ENCODE measurements at regions of chr6 and their contacts with region 1.

Region 1: DNA sequence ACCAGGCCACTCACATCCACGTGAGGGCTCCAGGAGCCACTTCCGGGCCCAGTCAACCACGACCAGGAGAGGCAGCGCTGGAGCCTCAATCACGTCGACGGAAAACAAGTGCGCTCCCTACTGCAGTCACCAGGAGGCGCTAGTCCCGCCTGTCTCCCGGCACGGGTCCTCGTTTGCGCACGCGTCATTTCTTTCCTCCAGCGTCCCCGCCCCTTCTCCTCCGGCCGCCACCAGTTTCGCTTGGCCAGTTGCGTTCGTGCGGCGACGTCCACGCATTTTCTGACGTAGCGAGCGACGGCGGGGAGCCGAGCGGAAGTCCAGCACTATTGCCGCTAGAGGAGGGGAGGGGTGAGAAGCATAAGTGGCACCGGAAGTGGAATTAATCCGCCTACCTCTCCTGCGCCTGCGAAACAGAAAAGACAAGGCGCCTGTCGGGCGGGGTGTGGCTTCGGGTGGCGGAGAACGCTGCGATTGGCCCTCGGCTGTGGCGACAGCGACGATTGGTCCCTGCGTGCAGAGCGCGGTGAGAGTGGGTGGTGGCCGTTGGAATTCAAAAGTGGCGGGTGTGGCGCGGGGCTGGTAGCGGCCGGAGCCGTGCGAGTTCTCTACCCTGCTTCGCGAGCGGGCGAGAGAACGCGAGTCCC is at the start of gene KIFC1:
- DNase-seq: peak; percentile 96 to 99
- H3K4me3 ChIP-seq: peak within 1 kb of the TSS; percentile 65 to 77
- H3K27ac ChIP-seq: peak within 1 kb of the TSS; percentile 91 to 93
- H3K4me1 ChIP-seq: peaks cover 3 to 6% of the 10 kb centered on the region in 2 donors
- H3K27me3 ChIP-seq: no peaks in the 10 kb centered on the region
- CTCF ChIP-seq: peak; percentile 93 to 96 (median 94)
- total RNA-seq, gene KIFC1: not detected

Region 2: GRCh38 chr6:33271458-33272274 is 119.7 kb before region 1 on chr6 and contains the starts of genes RPS18 and VPS52:
- intact Hi-C with region 1: loop called (anchors 2 kb)
- DNase-seq: peak; percentile 81 to 98
- H3K4me3 ChIP-seq: peak within 1 kb of the TSS; percentile 71 to 94
- H3K27ac ChIP-seq: peak within 1 kb of the TSS; percentile 91 to 96
- H3K4me1 ChIP-seq: peaks cover 9 to 42% of the 10 kb centered on the region in 2 donors
- H3K27me3 ChIP-seq: no peaks in the 10 kb centered on the region
- CTCF ChIP-seq: no peak
- total RNA-seq, gene RPS18: 1,863 TPM
- total RNA-seq, gene VPS52: 50.1 TPM

Region 3: DNA sequence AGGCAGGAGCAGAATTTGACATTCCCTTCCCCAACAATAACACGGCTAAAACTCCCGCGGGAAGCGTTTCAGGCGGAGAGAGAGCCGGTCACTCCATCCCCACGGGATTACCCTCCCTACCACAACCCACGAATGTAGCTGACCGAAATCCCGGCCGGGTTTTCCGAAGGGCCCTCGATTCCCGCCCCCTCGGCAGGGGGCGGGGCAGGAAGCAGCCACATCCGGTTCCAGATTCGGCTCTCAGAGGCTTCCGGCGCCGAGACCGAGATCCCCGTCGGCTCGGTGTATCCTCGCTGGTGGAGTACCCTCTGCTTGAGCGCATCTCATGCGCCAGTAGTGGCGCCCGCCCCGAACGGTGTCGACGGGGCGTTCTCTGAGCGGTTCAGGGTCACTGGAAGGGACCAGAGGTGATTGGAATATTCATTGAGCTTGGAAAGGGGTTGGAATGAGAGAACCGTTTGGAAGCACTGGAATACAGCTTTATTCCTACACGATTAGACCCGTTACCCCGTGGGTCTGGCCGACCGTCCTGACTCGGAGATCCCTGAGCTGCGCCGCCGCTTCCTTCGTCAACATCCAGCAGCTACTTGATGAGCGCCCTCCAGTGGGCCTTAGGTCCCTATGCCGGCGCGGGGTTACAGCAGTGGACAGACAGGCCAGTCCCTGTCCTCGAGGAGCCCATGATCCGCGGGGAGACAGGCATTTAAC is 92.0 kb before region 1 on chr6:
- intact Hi-C with region 1: loop called (anchors 1 kb)
- DNase-seq: peak in 1 of 2 donors; percentile 94
- H3K4me3 ChIP-seq: peak overlapping the region; percentile 96 to 97
- H3K27ac ChIP-seq: peak overlapping the region; percentile 97 to 98
- H3K4me1 ChIP-seq: peaks cover 7 to 18% of the 10 kb centered on the region in 2 donors
- H3K27me3 ChIP-seq: no peaks in the 10 kb centered on the region
- CTCF ChIP-seq: peak; percentile 65 to 76 (median 75)

Region 4: GRCh38 chr6:33410050-33410710 is 18.8 kb after region 1 on chr6:
- intact Hi-C with region 1: loop called (anchors 1 kb)
- DNase-seq: peak; percentile 89 to 98
- H3K4me3 ChIP-seq: peak overlapping the region; percentile 84 to 98
- H3K27ac ChIP-seq: peak overlapping the region; percentile 96 to 99
- H3K4me1 ChIP-seq: peaks cover 10% of the 10 kb centered on the region in 2 donors
- H3K27me3 ChIP-seq: no peaks in the 10 kb centered on the region
- CTCF ChIP-seq: no peak

Region 5: DNA sequence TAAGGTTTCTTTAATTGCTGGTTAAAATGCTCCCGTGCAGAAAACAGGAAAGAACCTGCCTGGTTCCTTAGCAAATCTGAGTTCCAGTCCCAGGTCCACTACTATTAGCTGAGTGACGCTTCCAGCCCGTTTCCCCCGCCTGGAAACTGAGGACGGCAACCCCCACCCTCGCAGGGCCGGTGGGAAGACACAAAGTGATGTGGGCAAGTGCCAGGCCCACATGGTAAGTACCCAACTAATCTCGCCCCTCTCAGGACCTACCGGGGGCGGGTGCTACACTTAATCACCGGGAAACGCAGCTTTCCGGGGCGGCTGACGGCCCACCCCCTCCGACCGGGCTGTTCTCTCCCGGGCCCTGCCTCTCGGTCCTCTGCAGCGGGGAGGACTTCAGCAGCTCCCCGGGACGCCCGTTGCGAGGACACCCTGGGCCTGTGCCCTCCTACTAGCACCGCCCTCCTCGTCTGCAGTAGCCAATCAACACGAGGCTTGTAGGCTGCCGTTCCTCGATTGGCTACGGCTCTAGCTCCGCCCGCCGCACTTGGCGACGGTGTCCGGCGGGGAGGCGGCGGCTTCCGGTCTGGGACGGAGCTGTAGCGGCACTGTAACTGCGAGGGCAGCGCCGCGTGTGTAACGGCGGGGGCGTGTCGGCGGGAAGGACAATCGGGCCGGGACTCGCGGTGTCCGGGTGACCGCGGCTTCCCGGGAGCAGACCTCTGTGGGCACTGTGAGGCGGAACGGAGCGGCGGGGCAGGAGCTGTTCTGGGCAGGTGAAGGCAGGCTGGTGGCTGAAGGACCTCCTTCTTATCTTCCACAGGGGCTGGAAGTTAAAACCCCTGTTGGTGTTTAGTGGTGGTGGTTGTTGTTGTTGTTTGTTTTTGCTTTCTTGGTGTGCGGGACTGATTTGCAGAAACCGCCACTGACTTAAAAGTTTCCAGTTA is 62.9 kb after region 1 on chr6 and contains the start of gene ZBTB9:
- intact Hi-C with region 1: loop called (anchors 1 kb)
- DNase-seq: peak; percentile 92 to 98
- H3K4me3 ChIP-seq: peak within 1 kb of the TSS; percentile 87 to 94
- H3K27ac ChIP-seq: peak within 1 kb of the TSS; percentile 70 to 73
- H3K4me1 ChIP-seq: peaks cover 6 to 17% of the 10 kb centered on the region in 2 donors
- H3K27me3 ChIP-seq: no peaks in the 10 kb centered on the region
- CTCF ChIP-seq: no peak
- total RNA-seq, gene ZBTB9: 45.8 TPM

Region 6: GRCh38 chr6:33505548-33506370 is 114.4 kb after region 1 on chr6:
- intact Hi-C with region 1: no loop called
- DNase-seq: no peak
- H3K4me3 ChIP-seq: no peak overlapping the region
- H3K27ac ChIP-seq: no peak overlapping the region
- H3K4me1 ChIP-seq: no peaks in the 10 kb centered on the region
- H3K27me3 ChIP-seq: no peaks in the 10 kb centered on the region
- CTCF ChIP-seq: no peak

Measured in ascending aorta (tissue), 2 donors.